H1 (cell line): ENCODE measurements at regions of chr3 and their contacts with region 1.

Region 1: DNA sequence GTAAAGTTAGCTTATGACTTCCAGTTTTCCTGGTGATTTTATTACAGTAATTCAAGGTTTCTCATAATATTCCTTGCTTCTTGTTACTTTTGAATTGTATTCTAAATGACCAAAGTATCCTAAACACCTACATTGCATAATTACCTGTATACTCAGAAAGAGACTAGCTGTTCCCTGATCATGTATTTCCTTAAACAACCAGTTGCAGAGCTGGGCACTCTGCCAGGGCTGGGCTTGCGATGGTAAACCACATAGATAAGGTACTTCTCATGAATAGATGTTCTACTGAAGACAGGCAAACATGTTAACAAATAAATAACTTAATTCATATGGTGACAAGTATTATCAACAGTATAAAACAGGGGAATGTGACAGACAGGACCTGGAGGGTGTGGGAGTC is 142.3 kb upstream of the WNT5A start:
- DNase-seq: no peak
- H3K4me3 ChIP-seq: no peak overlapping the region
- H3K27ac ChIP-seq: no peak overlapping the region
- H3K4me1 ChIP-seq: peaks cover 0 to 2% (median 0%) of the 10 kb centered on the region in 4 experiments; a peak in 1 of 7 replicates
- H3K27me3 ChIP-seq: peaks cover 0 to 2% (median 0%) of the 10 kb centered on the region in 4 experiments; a peak in 1 of 7 replicates
- CTCF ChIP-seq: no peak
- EP300 ChIP-seq: no peak
- POLR2A ChIP-seq: no peak
- RAD21 ChIP-seq: no peak

Region 2: DNA sequence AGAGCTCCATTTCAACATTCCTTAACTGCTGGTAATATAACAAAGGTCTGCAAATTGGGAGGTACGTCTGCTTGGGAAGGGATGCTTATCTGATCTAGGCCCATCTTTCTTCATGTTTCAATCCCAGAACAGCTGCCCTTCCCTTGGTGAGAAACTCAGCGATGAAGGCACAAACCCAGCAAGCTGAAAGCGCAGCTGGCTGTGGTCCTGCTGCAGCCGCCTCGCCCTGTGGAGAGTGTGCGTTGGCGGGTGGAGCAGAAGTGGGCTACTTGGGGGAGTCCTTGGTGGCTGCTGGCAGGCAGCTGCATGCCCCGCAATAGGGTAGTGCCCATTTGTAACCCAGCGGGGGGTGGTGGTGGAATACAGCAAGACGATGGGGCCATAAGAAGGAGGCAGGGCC is 18.2 kb after region 1 on chr3:
- CTCF ChIA-PET with region 1: interaction called, 14 read pairs
- POLR2A ChIA-PET with region 1: interaction called, 7 read pairs
- DNase-seq: no peak
- H3K4me3 ChIP-seq: no peak overlapping the region
- H3K27ac ChIP-seq: no peak overlapping the region
- H3K4me1 ChIP-seq: peaks cover 14 to 30% (median 24%) of the 10 kb centered on the region in 4 experiments
- H3K27me3 ChIP-seq: no peaks in the 10 kb centered on the region
- CTCF ChIP-seq: no peak
- EP300 ChIP-seq: no peak
- POLR2A ChIP-seq: no peak
- RAD21 ChIP-seq: no peak

Region 3: GRCh38 chr3:55682461-55682860 is 53.0 kb after region 1 on chr3:
- CTCF ChIA-PET with region 1: no interaction called
- POLR2A ChIA-PET with region 1: no interaction called
- DNase-seq: no peak
- H3K4me3 ChIP-seq: no peak overlapping the region
- H3K27ac ChIP-seq: no peak overlapping the region
- H3K4me1 ChIP-seq: peaks cover 0 to 2% (median 0%) of the 10 kb centered on the region in 4 experiments; a peak in 1 of 7 replicates
- H3K27me3 ChIP-seq: no peaks in the 10 kb centered on the region
- CTCF ChIP-seq: no peak
- EP300 ChIP-seq: no peak
- POLR2A ChIP-seq: no peak
- RAD21 ChIP-seq: no peak